ENCODE measurements at regions of chr3 and their contacts with region 1.

Region 1: DNA sequence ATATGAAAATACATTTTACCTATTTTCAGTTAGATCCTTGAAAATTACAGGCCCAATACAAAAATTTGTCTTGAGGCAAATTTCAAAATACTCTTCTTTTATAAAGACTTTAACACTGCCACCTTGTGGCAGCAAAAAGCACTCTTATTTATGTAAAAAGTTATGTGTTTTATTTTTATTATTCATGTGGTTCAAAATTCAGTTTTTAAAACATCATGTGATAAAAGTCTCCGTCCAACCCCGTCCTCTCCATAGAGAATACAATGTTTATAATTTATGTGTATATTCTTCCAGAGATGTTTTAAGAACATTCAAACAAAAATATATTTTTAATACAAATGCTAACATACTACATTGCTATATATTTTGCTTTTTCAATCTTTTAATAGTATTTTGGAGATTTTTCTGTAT is 36.9 kb upstream of the TRIM59 start:
- DNase-seq: no peak
- H3K4me3 Mint-ChIP-seq: no peak overlapping the region
- H3K27ac Mint-ChIP-seq: no peak overlapping the region
- H3K4me1 Mint-ChIP-seq: peaks cover 2% of the 10 kb centered on the region
- H3K27me3 Mint-ChIP-seq: no peaks in the 10 kb centered on the region

Region 2: GRCh38 chr3:160099834-160100233 is 386.6 kb before region 1 on chr3:
- CTCF ChIA-PET with region 1: no interaction called
- POLR2A ChIA-PET with region 1: no interaction called
- intact Hi-C with region 1: no loop called
- DNase-seq: no peak
- H3K4me3 Mint-ChIP-seq: no peak overlapping the region
- H3K27ac Mint-ChIP-seq: no peak overlapping the region
- H3K4me1 Mint-ChIP-seq: no peaks in the 10 kb centered on the region
- H3K27me3 Mint-ChIP-seq: peaks cover 10% of the 10 kb centered on the region

Region 3: DNA sequence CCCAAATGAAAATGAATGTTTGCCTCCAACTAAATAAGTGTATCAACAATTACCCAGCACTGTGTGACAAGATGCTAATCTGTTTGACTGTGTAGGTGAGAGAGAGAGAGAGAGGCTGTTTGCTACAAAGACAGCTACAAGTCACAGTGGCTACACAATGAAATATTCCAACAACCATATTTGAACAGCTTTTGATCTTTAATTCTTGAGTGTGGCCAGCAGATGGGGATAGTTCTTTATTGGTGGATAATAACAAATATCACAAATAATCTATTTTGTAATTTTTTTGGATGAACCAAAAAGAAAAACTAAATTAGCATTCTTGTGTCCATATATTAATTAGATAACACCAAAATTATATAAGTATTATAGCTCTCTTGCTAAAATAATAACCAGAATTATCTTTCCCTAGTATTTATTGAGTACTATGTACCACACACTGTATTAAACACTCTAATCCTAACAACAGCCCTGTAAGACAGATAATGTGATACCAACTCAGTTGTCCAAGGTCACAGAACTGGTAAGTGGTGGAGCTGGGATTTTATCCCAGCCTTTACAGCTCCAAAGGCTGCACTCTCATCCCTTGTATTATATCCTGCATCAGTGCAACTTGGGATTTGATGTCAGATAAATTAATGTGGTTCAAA is 323.1 kb before region 1 on chr3:
- CTCF ChIA-PET with region 1: interaction called, 4 read pairs
- POLR2A ChIA-PET with region 1: no interaction called
- intact Hi-C with region 1: loop called (anchors 1 kb)
- DNase-seq: no peak
- H3K4me3 Mint-ChIP-seq: no peak overlapping the region
- H3K27ac Mint-ChIP-seq: no peak overlapping the region
- H3K4me1 Mint-ChIP-seq: no peaks in the 10 kb centered on the region
- H3K27me3 Mint-ChIP-seq: peaks cover 3% of the 10 kb centered on the region

Region 4: GRCh38 chr3:160540551-160540950 is 54.1 kb after region 1 on chr3:
- CTCF ChIA-PET with region 1: no interaction called
- POLR2A ChIA-PET with region 1: no interaction called
- intact Hi-C with region 1: no loop called
- DNase-seq: no peak
- H3K4me3 Mint-ChIP-seq: no peak overlapping the region
- H3K27ac Mint-ChIP-seq: no peak overlapping the region
- H3K4me1 Mint-ChIP-seq: peaks cover 56% of the 10 kb centered on the region
- H3K27me3 Mint-ChIP-seq: no peaks in the 10 kb centered on the region

Measured in activated CD4-positive, alpha-beta memory T cell treated with anti-CD3 and anti-CD28 coated beads for 36 hours (primary cell).